OCI-LY7 (cell line): ENCODE measurements at regions of chr19 and their contacts with region 1.

Region 1: GRCh38 chr19:34178274-34178610 is 5.9 kb downstream of the LSM14A start:
- DNase-seq: no peak
- H3K4me3 ChIP-seq: peak overlapping the region; percentile 88
- H3K27ac ChIP-seq: peak overlapping the region; percentile 28
- H3K4me1 ChIP-seq: peaks cover 49% of the 10 kb centered on the region
- CTCF ChIP-seq: no peak

Region 2: DNA sequence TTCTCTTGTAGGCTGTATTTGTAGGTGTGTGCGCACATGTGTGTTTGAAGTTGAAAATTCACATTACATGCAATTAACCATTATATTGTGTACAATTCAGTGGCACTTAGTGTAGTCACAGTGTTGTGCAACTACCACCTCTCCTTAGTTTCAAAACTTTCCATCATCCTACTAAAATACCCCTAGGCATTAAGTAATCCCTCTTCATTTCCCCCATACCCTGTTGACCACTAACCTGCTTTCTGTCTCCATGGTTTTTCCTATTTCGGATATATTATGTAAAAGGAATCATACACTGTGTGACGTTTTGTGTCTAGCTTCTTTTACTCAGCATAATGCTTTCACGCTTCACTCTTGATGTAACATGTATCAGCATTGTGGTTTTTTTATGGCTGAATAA is 10.2 kb after region 1 on chr19:
- CTCF ChIA-PET with region 1: no interaction called
- POLR2A ChIA-PET with region 1: interaction called, 26 read pairs
- intact Hi-C with region 1: no loop called
- DNase-seq: no peak
- H3K4me3 ChIP-seq: no peak overlapping the region
- H3K27ac ChIP-seq: no peak overlapping the region
- H3K4me1 ChIP-seq: peaks cover 86% of the 10 kb centered on the region
- CTCF ChIP-seq: no peak

Region 3: DNA sequence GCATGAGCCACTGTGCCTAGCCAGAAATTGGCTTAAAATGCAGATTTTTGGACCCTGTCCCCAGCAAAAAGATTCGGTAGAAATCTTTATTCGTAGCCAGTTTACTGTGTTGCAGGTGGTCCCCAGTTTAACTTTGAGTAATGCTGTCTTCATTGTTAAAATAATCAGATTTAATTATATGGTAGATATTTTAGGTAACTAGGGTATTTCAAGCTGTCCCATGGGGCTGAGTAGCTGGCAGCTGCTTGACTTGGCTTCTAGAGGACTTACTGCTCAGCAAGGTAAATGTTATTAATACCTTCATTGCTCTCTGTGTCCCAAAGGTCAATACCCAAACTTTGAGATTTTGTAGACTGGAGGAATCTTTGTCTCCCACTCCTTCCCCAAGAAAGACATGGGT is 15.2 kb after region 1 on chr19:
- CTCF ChIA-PET with region 1: no interaction called
- POLR2A ChIA-PET with region 1: interaction called, 26 read pairs
- intact Hi-C with region 1: no loop called
- DNase-seq: peak; percentile 83
- H3K4me3 ChIP-seq: peak overlapping the region; percentile 51
- H3K27ac ChIP-seq: peak overlapping the region; percentile 90
- H3K4me1 ChIP-seq: peaks cover 65% of the 10 kb centered on the region
- CTCF ChIP-seq: no peak